PC-9 (cell line): ENCODE measurements at regions of chr7 and their contacts with region 1.

Region 1: DNA sequence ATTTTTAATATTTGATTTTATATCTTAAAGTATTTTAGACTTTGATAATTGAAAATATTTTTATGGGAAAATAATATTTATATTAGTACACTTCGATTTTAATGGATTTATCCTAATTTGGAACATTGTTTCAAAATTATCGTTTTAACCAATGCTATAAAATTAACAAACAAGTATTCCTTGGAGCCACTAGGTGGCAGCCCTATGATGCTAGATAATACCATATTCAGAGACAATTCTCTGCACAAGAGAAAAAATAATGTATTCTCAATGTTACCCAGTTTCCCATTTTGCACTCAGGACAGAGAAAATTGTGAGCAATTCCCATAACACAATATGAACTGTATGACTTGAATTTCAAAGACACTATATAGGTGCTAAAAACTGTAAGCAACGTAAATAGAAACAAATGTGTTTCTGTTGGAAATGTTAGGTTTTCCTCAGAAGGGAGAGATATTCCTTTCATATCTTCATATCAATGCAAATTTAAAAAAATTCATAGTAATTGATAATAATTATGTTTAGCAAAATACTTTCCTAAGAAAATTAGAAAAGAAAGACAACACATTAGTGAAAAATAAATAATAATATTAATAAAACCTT is 237.8 kb downstream of the SEMA3E start:
- DNase-seq: peak in 1 of 2 experiments; percentile 40
- H3K4me3 ChIP-seq: no peak overlapping the region
- H3K27ac ChIP-seq: no peak overlapping the region
- H3K4me1 ChIP-seq: no peaks in the 10 kb centered on the region
- H3K27me3 ChIP-seq: no peaks in the 10 kb centered on the region
- CTCF ChIP-seq: peak; percentile 83

Region 2: DNA sequence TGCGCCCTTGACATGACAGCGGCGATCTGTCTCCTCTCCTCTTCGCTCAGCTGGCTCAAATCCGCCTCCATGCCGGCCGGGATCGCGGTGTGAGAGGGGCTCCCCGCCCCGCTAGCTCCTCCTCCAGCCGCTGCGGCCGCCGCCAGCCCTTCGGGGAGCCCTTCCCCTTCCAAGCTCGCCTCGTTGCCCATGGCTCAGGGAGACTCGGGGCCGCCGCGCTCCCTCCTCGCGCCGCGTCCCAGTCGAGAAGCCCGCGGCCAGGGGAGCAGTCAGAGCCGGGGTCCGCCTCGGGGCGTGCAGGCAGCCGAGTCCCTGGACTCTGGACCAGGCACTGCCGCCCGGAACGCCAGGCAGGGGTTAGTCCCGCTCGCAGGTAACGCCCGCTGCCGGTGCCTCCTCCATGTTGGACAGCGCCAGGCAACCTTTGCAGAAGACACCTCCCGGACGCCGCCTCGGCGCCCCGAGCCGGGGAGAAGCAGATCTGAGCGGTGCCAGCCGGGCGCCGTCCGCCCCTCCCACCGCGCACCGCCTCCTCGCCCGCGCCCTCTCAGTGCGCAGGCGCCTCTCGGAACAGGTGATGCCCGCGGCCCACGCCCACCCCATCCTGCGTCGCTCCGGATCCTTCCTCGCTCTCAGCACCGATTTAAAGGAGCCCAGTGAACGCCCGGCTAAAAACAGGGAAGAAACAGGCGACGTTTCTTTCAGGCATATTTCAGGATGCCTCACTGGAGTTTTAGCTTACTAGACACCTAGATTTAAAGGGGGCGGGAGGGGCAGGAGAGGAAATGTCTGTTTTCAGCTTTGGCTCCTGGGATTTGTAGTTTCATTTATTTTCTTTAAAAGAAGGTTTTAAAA is 248.5 kb before region 1 on chr7 and contains the start of gene PCLO:
- CTCF ChIA-PET with region 1: no interaction called
- POLR2A ChIA-PET with region 1: no interaction called
- intact Hi-C with region 1: no loop called
- DNase-seq: peak; percentile 87 to 98
- H3K4me3 ChIP-seq: peak within 1 kb of the TSS; percentile 98
- H3K27ac ChIP-seq: peak within 1 kb of the TSS; percentile 70
- H3K4me1 ChIP-seq: peaks cover 18% of the 10 kb centered on the region
- H3K27me3 ChIP-seq: no peaks in the 10 kb centered on the region
- CTCF ChIP-seq: no peak
- total RNA-seq, gene PCLO: 2.6 and 4.0 TPM in 2 replicates

Region 3: GRCh38 chr7:83504330-83504729 is 93.2 kb after region 1 on chr7:
- CTCF ChIA-PET with region 1: no interaction called
- POLR2A ChIA-PET with region 1: no interaction called
- intact Hi-C with region 1: no loop called
- DNase-seq: no peak
- H3K4me3 ChIP-seq: no peak overlapping the region
- H3K27ac ChIP-seq: no peak overlapping the region
- H3K4me1 ChIP-seq: no peaks in the 10 kb centered on the region
- H3K27me3 ChIP-seq: no peaks in the 10 kb centered on the region
- CTCF ChIP-seq: no peak

Region 4: GRCh38 chr7:83524286-83525075 is 113.4 kb after region 1 on chr7:
- CTCF ChIA-PET with region 1: no interaction called
- POLR2A ChIA-PET with region 1: no interaction called
- intact Hi-C with region 1: loop called (anchors 10 kb)
- DNase-seq: peak; percentile 34 to 80
- H3K4me3 ChIP-seq: no peak overlapping the region
- H3K27ac ChIP-seq: no peak overlapping the region
- H3K4me1 ChIP-seq: peaks cover 9% of the 10 kb centered on the region; the same call in 1 of the 2 replicates
- H3K27me3 ChIP-seq: no peaks in the 10 kb centered on the region
- CTCF ChIP-seq: no peak

Region 5: GRCh38 chr7:83791737-83792136 is 380.6 kb after region 1 on chr7:
- CTCF ChIA-PET with region 1: no interaction called
- POLR2A ChIA-PET with region 1: no interaction called
- intact Hi-C with region 1: loop called (anchors 1 kb)
- DNase-seq: no peak
- H3K4me3 ChIP-seq: no peak overlapping the region
- H3K27ac ChIP-seq: no peak overlapping the region
- H3K4me1 ChIP-seq: no peaks in the 10 kb centered on the region
- H3K27me3 ChIP-seq: no peaks in the 10 kb centered on the region
- CTCF ChIP-seq: no peak

Region 6: GRCh38 chr7:83936056-83936708 is 525.1 kb after region 1 on chr7:
- CTCF ChIA-PET with region 1: no interaction called
- POLR2A ChIA-PET with region 1: no interaction called
- intact Hi-C with region 1: loop called (anchors 2 kb)
- DNase-seq: peak; percentile 49 to 72
- H3K4me3 ChIP-seq: no peak overlapping the region
- H3K27ac ChIP-seq: no peak overlapping the region
- H3K4me1 ChIP-seq: no peaks in the 10 kb centered on the region
- H3K27me3 ChIP-seq: no peaks in the 10 kb centered on the region
- CTCF ChIP-seq: peak; percentile 91